Breast epithelium (tissue), 4 donors: ENCODE measurements at regions of chr7 and their contacts with region 1.

Region 1: DNA sequence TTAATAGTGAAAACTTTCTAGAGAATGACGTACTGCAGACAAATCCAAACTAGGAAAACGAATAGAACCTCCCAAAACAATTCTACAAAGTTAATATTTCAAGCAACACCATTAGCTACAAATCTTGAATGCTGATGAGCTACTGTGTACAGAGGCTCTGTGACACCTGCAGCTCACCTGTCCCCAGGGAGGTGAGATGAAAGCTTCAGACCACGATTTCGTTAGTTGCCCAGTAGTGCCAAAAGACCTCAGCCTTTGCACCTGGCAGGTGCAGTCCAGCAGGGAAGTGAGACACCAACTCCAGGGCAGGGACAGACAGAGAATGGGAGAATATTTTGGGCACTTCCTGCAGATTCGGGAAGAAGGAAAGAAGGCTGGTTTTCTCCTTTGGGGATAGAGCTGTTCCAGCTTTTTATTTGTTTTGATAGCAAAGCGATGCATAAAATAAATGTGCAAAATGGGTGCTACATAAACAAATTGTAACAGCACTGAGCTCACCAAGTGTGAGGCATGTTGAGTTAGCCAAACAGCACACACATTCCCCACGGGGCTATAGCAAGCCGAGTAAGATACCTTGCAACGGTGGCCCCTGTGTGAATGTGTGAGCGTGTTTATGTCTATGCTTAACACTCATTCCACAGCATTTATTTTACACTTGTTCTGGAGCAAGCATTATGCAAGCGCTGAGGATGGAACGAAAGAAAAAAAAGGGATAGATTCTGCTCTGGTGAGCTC is 1024.8 kb upstream of the AUTS2 start:
- DNase-seq: no peak
- H3K4me3 ChIP-seq: no peak overlapping the region
- H3K27ac ChIP-seq: no peak overlapping the region
- H3K4me1 ChIP-seq: no peaks in the 10 kb centered on the region
- H3K27me3 ChIP-seq: no peaks in the 10 kb centered on the region
- CTCF ChIP-seq: no peak
- POLR2A ChIP-seq: no peak

Region 2: DNA sequence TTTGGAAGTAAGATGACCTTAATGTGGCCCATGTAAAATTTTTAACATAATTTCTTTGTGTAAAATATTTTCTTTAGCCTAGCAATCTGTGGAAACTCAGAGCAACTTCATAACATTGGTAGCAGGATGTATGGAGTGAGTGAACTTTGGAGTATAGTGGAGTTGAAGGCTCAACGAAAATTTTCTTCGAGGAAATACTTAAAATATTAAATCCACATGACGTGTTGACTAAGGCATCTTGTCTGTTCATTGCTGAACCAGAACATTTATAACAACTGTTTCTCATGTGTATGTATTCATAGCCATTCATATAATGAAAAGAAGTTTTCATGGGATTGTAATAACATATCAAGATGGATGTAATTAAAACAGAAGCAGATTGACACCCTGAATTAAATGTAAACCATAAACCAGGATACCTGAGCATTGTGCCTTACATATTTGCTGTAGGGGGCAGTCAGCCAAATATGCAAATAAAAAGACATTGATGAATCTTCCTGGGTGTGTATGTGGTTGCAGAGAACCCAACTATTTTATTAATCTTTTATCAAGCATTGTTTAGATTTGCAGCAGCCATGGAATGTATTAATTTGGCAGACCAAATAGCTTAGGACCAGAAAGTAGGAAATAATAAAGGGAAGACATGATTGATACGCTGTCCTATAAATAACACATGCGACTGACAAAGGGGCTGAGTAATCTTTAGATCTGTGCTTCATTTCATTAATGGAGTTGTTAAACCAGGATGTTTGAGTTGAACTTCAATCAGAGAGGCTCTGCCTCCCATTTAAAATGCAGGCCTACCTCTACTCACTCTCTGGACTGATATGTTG is 1036.3 kb after region 1 on chr7:
- intact Hi-C with region 1: loop called (anchors 5 kb)
- DNase-seq: no peak
- H3K4me3 ChIP-seq: no peak overlapping the region
- H3K27ac ChIP-seq: no peak overlapping the region
- H3K4me1 ChIP-seq: no peaks in the 10 kb centered on the region
- H3K27me3 ChIP-seq: no peaks in the 10 kb centered on the region
- CTCF ChIP-seq: no peak
- POLR2A ChIP-seq: no peak

Region 3: GRCh38 chr7:69982197-69982596 is 1408.8 kb after region 1 on chr7:
- intact Hi-C with region 1: no loop called
- DNase-seq: no peak
- H3K4me3 ChIP-seq: no peak overlapping the region
- H3K27ac ChIP-seq: no peak overlapping the region
- H3K4me1 ChIP-seq: no peaks in the 10 kb centered on the region
- H3K27me3 ChIP-seq: no peaks in the 10 kb centered on the region
- CTCF ChIP-seq: no peak
- POLR2A ChIP-seq: no peak